ENCODE measurements at regions of chr7 and their contacts with region 1.

Region 1: DNA sequence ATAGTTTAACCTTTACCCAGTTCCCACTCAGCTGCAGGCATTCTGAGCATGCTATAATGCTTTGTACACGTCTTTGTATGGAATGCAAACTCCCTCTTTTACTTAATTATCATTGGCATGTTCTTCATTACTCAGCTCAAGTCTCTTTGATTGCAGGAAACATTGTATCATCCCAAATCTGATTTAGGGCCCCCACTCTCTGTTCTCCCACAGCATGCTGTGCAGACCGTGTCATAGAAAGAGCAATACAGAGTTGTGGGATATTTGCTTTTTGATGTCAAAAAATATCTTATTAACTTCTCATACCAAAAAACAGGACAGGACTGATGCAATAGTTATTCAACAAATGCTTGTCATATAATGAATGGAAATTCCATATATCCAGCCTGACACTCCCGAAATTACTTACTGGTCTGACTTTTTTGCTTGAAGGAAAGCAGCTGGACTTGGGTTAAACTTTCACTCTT is 1081.5 kb upstream of the C7orf33 start:
- DNase-seq: no peak
- H3K4me3 ChIP-seq: no peak overlapping the region
- H3K27ac ChIP-seq: no peak overlapping the region
- H3K4me1 ChIP-seq: no peaks in the 10 kb centered on the region
- H3K27me3 ChIP-seq: peaks cover 12% of the 10 kb centered on the region; the same call in 1 of the 2 replicates
- CTCF ChIP-seq: no peak

Region 2: GRCh38 chr7:146991596-146991995 is 517.5 kb before region 1 on chr7:
- CTCF ChIA-PET with region 1: no interaction called
- POLR2A ChIA-PET with region 1: no interaction called
- intact Hi-C with region 1: no loop called
- DNase-seq: no peak
- H3K4me3 ChIP-seq: no peak overlapping the region
- H3K27ac ChIP-seq: no peak overlapping the region
- H3K4me1 ChIP-seq: no peaks in the 10 kb centered on the region
- H3K27me3 ChIP-seq: no peaks in the 10 kb centered on the region
- CTCF ChIP-seq: no peak

Region 3: DNA sequence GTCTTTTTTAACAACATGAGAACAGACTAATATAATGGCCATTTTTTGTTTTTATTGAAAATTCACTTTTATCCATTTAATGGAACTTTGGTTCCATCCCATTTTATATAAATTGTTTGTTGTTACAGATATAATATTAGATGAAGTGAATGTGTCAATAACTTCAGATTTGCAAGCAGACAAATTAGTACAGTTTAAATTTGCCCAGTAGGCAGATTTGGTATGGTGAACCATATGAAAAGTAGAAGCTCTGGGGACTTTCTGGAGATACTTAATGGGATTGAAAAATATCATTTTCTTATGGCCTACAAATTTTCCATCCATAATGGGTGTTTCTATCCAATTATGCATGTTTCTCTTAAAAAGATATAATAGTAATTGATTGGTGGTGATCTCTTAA is 114.7 kb before region 1 on chr7:
- CTCF ChIA-PET with region 1: no interaction called
- POLR2A ChIA-PET with region 1: no interaction called
- intact Hi-C with region 1: no loop called
- DNase-seq: no peak
- H3K4me3 ChIP-seq: no peak overlapping the region
- H3K27ac ChIP-seq: no peak overlapping the region
- H3K4me1 ChIP-seq: no peaks in the 10 kb centered on the region
- H3K27me3 ChIP-seq: no peaks in the 10 kb centered on the region
- CTCF ChIP-seq: no peak

Region 4: DNA sequence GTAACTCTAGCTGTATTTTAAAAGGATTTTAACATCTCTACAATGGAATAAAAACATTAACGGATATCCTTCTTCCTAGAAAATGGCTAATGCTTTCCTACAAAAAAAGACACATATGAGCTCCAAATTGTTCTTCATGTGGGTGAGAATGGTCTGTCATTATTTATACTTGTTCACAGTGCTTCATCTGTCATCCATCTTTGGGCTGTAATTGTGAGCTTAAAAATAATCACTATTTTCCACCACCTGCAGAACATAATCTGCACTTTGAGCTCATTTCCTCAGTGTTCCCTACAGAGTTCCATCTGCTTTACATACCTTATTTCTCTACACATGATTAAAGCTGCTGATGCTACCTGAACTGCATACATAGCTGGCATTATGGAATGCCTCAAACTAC is 102.4 kb after region 1 on chr7:
- CTCF ChIA-PET with region 1: no interaction called
- POLR2A ChIA-PET with region 1: interaction called, 25 read pairs
- intact Hi-C with region 1: no loop called
- DNase-seq: no peak
- H3K4me3 ChIP-seq: no peak overlapping the region
- H3K27ac ChIP-seq: no peak overlapping the region
- H3K4me1 ChIP-seq: no peaks in the 10 kb centered on the region
- H3K27me3 ChIP-seq: peaks cover 18% of the 10 kb centered on the region; the same call in 1 of the 2 replicates
- CTCF ChIP-seq: no peak

Measured in PC-9 (cell line).